ENCODE measurements at regions of chr16 and their contacts with region 1.

Region 1: GRCh38 chr16:2023098-2023925 is 3.4 kb upstream of the NHERF2 start:
- DNase-seq: peak; percentile 63
- ATAC-seq: peak; percentile 80
- H3K4me3 ChIP-seq: peak overlapping the region; percentile 35 to 47
- H3K27ac ChIP-seq: peak overlapping the region; percentile 79
- H3K4me1 ChIP-seq: peaks cover 24% of the 10 kb centered on the region
- H3K27me3 ChIP-seq: no peaks in the 10 kb centered on the region
- CTCF ChIP-seq: peak; percentile 96

Region 2: GRCh38 chr16:2056681-2057407 is 33.5 kb after region 1 on chr16:
- CTCF ChIA-PET with region 1: interaction called, 12 read pairs
- POLR2A ChIA-PET with region 1: no interaction called
- in situ Hi-C with region 1: no loop called
- intact Hi-C with region 1: no loop called
- DNase-seq: no peak
- ATAC-seq: peak; percentile 84
- H3K4me3 ChIP-seq: no peak overlapping the region
- H3K27ac ChIP-seq: no peak overlapping the region
- H3K4me1 ChIP-seq: no peaks in the 10 kb centered on the region
- H3K27me3 ChIP-seq: no peaks in the 10 kb centered on the region
- CTCF ChIP-seq: no peak; the same call in 1 of the 2 replicates

Region 3: DNA sequence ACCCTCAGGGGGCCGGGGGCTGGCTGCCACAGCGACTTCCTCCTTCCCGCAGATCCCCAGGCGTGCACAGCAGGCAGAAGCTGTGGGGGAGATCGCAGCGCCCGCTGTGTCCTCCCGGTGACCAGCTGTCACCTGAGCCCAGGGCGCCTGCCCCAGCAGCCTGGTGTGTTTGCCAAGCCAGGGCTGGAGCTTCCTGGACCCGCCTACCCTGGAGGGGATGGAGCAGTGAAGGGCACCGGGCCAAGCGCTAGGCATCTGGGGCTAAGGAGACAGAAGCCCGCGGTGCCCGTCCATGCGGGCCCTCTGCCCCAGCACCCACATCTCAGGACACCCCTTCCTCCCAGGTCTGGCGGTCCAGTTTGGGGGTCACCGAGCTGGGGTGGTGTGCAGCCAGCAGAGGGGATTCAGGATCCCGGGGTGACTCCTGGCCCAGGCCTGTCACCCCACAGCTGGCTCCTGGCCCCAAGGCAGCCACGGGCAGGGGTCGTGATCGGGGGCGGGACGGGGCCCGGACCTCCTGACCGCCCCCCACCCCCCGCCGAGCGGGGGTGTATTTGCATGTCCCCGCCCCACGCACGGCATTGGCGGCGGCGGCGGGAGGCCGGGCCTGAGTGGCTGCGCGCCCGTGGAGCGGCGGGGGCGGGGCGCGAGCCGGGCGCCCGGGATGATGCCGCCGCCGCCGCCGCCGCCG is 124.8 kb after region 1 on chr16 and contains the start of gene RAB26:
- CTCF ChIA-PET with region 1: interaction called, 7 read pairs
- POLR2A ChIA-PET with region 1: interaction called, 4 read pairs
- in situ Hi-C with region 1: no loop called
- intact Hi-C with region 1: loop called (anchors 10 kb)
- DNase-seq: no peak
- ATAC-seq: peak; percentile 59
- H3K4me3 ChIP-seq: peak within 1 kb of the TSS; percentile 59 to 67
- H3K27ac ChIP-seq: peak within 1 kb of the TSS; percentile 100
- H3K4me1 ChIP-seq: peaks cover 50% of the 10 kb centered on the region
- H3K27me3 ChIP-seq: no peaks in the 10 kb centered on the region
- CTCF ChIP-seq: no peak
- total RNA-seq, gene RAB26: 92.2 TPM

Measured in Panc1 (cell line).